ENCODE measurements at regions of chrX and their contacts with region 1.

Region 1: GRCh38 chrX:100883654-100884053 is 9.5 kb upstream of the NOX1 start:
- DNase-seq: peak; percentile 68
- ATAC-seq: peak; percentile 42; the same call in 2 of the 3 replicates
- H3K4me3 ChIP-seq: no peak overlapping the region; a peak in 1 of 6 replicates
- H3K27ac ChIP-seq: no peak overlapping the region
- H3K4me1 ChIP-seq: peaks cover 35% of the 10 kb centered on the region
- H3K27me3 ChIP-seq: no peaks in the 10 kb centered on the region
- CTCF ChIP-seq: no peak
- EP300 ChIP-seq: peak in 1 of 2 experiments; percentile 69; a peak in 2 of 4 replicates
- POLR2A ChIP-seq: no peak
- RAD21 ChIP-seq: no peak

Region 2: DNA sequence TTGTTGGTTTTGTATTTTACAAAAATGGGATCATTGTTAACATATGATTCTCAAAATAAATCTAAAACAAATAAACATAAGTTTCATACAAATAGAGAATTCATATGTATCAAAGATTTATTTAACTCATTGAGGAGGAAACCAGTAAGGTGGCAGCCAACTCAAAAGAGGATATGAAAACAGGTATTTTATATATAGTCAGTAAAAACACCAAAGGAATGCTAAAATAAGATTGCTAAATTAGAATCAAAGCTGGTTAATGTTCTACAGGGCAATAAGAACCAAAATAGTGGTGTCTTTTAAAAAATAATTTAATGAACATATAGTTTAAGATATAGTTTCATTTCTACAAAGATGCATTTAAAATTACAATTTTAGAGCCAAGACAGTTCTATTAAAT is 22.0 kb after region 1 on chrX:
- CTCF ChIA-PET with region 1: no interaction called
- POLR2A ChIA-PET with region 1: no interaction called
- in situ Hi-C with region 1: no loop called
- intact Hi-C with region 1: loop called (anchors 1 kb)
- DNase-seq: no peak
- ATAC-seq: no peak
- H3K4me3 ChIP-seq: no peak overlapping the region
- H3K27ac ChIP-seq: no peak overlapping the region
- H3K4me1 ChIP-seq: no peaks in the 10 kb centered on the region
- H3K27me3 ChIP-seq: no peaks in the 10 kb centered on the region
- CTCF ChIP-seq: no peak
- EP300 ChIP-seq: no peak
- POLR2A ChIP-seq: no peak
- RAD21 ChIP-seq: no peak